ENCODE measurements at regions of chr3 and their contacts with region 1.

Region 1: GRCh38 chr3:114827495-114827894 is 319.6 kb downstream of the ZBTB20 start:
- DNase-seq: peak; percentile 17
- H3K4me3 Mint-ChIP-seq: no peak overlapping the region
- H3K27ac Mint-ChIP-seq: no peak overlapping the region
- H3K4me1 Mint-ChIP-seq: no peaks in the 10 kb centered on the region
- H3K27me3 Mint-ChIP-seq: no peaks in the 10 kb centered on the region
- CTCF ChIP-seq: peak; percentile 49

Region 2: DNA sequence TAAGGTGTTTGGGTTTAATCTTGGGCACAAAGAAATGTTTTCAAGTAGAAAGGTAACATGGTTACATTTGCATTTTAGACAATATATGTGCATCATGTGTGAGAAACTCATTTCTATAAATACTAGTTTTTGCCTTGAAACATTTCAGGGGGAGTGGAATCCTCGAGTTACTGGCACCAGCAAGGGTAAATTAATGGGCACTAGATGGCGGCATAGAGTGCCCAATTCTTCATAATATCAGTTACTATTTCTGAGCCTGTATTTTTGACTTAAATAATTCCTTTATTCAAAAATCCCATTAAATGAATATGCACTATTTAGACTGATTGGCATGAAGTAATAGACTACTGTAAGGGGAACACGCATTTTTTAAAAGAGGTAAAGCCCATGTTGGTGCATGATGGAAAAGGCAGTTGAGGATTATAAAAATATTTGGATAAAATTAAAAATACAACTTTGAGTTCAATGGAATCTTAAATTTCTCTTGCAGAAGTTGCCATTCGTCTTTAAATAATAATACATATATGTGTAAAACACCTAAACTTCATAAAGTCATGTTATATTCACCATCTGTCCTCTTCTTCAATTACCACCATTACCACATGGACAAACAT is 213.3 kb after region 1 on chr3:
- CTCF ChIA-PET with region 1: no interaction called
- intact Hi-C with region 1: loop called (anchors 1 kb)
- DNase-seq: peak; percentile 42
- H3K4me3 Mint-ChIP-seq: no peak overlapping the region
- H3K27ac Mint-ChIP-seq: no peak overlapping the region
- H3K4me1 Mint-ChIP-seq: no peaks in the 10 kb centered on the region
- H3K27me3 Mint-ChIP-seq: no peaks in the 10 kb centered on the region
- CTCF ChIP-seq: no peak

Region 3: DNA sequence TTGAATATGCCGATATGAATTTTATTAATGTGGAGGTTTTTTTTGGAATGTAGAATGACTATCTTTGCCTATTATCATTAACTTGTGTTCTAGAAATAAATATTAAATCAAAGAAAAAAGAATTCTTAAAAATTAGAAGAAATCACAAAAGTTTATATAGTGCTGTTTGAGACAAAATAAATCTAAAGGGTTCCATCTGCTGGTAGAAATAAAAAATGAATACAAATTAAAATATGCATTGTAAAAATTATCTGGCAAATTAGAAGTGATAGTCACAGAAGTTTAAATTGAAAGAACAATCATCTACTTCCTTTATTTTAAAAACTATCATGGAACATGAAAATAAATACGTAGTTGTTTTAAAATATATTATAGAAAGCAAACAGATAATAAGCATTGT is 342.3 kb after region 1 on chr3:
- CTCF ChIA-PET with region 1: no interaction called
- intact Hi-C with region 1: loop called (anchors 2 kb)
- DNase-seq: no peak
- H3K4me3 Mint-ChIP-seq: no peak overlapping the region
- H3K27ac Mint-ChIP-seq: no peak overlapping the region
- H3K4me1 Mint-ChIP-seq: no peaks in the 10 kb centered on the region
- H3K27me3 Mint-ChIP-seq: no peaks in the 10 kb centered on the region
- CTCF ChIP-seq: no peak

Measured in Calu3 (cell line).